ENCODE measurements at regions of chr16 and their contacts with region 1.

Region 1: DNA sequence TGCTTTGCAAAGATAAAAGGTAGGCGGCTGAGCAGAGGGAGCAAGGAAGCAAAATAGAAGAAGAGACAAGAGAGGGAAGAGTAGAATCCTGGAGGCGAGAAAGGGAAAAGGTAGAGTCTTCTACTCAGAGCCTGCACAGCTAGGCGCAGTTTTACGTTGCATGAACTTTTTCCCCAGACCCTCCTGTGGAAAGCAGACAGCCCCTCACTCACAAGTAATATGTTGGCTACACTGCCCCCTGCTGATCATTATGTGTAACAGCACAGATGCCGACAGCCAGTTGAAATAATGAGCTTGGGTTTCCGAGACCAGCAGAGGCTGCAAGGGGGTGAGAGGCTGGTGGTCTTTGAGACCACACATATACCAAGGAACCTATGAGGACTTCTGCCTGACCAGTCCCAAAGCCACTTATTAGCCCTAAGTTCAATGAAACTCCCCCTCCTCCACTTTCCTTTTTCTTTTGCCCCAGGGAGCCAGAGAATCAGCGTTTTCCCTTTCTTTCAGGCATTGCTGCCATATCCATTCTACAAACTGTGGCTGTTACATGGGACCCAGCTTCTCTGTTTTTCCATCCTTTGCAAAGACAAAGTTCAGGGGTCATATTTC is 22.5 kb upstream of the CMTR2 start:
- DNase-seq: peak; percentile 54
- ATAC-seq: peak; percentile 61; the same call in 2 of the 3 replicates
- H3K4me3 ChIP-seq: no peak overlapping the region
- H3K27ac ChIP-seq: no peak overlapping the region
- H3K4me1 ChIP-seq: no peaks in the 10 kb centered on the region
- H3K27me3 ChIP-seq: peaks cover 0 to 2% of the 10 kb centered on the region in 2 experiments; a peak in 1 of 5 replicates
- CTCF ChIP-seq: peak; percentile 91
- EP300 ChIP-seq: no peak
- POLR2A ChIP-seq: no peak
- RAD21 ChIP-seq: peak; percentile 89

Region 2: DNA sequence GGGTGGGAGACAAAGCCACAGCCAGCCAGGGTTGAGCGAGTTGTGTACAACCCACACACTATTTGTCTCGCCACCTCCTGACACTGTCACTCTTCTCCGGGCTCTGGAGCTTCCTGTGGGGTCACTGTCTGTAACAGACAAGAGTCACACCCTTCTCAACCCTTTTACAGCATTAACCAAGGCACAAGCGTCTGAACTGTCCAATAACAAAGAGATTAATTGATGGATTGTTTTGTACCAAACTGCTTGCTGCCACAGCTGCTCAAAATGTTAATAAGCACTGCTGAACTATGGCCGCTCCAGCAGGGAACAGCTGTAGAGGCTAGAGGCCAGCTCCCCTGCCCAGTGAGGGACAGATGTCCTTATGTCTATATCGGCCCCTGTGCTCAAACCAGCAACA is 55.9 kb before region 1 on chr16:
- CTCF ChIA-PET with region 1: no interaction called
- POLR2A ChIA-PET with region 1: no interaction called
- in situ Hi-C with region 1: no loop called
- intact Hi-C with region 1: loop called (anchors 2 kb)
- DNase-seq: no peak
- ATAC-seq: peak; percentile 35; the same call in 1 of the 3 replicates
- H3K4me3 ChIP-seq: no peak overlapping the region
- H3K27ac ChIP-seq: no peak overlapping the region
- H3K4me1 ChIP-seq: no peaks in the 10 kb centered on the region
- H3K27me3 ChIP-seq: peaks cover 0 to 23% of the 10 kb centered on the region in 2 experiments; a peak in 2 of 5 replicates
- CTCF ChIP-seq: no peak
- EP300 ChIP-seq: no peak
- POLR2A ChIP-seq: no peak
- RAD21 ChIP-seq: no peak

Region 3: GRCh38 chr16:71338193-71338592 is 26.5 kb after region 1 on chr16:
- CTCF ChIA-PET with region 1: no interaction called
- POLR2A ChIA-PET with region 1: no interaction called
- in situ Hi-C with region 1: no loop called
- intact Hi-C with region 1: no loop called
- DNase-seq: peak; percentile 78
- ATAC-seq: peak; percentile 71
- H3K4me3 ChIP-seq: no peak overlapping the region
- H3K27ac ChIP-seq: no peak overlapping the region
- H3K4me1 ChIP-seq: peaks cover 17% of the 10 kb centered on the region
- H3K27me3 ChIP-seq: peaks cover 0 to 21% of the 10 kb centered on the region in 2 experiments; a peak in 2 of 5 replicates
- CTCF ChIP-seq: no peak
- EP300 ChIP-seq: peak in 1 of 2 experiments; percentile 58; a peak in 2 of 4 replicates
- POLR2A ChIP-seq: no peak
- RAD21 ChIP-seq: no peak

Measured in HepG2 (cell line).